SK-N-SH (cell line): ENCODE measurements at regions of chr3 and their contacts with region 1.

Region 1: DNA sequence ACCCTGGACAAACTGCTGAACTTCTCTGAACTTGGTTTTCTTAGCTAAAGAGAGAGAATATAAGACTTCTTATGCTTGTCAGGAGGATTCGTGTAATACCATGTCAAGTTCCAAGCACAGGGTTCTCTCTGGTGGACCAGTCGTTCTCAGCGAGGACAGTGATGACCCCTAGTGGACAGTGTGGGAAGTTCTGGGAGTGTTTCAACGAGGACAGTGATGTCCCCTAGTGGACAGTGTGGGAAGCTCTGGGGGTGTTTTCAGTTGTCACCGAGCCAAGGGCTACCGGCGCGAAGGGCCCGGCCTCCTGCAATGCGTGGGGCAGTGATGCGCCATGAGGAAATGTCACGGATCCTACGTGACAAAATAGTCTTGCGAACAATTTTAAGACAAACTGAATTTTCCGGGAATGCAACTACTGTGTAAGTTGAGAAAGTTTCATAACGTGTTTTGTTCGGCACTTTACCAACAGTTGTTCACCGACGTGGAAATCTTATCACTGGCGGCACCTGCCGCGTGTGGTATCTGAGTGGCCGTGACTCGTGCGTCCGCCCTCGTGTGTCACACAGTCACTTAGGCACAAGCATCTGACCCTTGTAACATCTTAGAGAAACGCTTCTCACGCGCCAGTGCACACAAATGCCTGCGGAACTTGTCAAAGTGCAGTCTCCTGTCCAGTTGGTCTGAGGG is 39.3 kb upstream of the MUC4 start:
- DNase-seq: peak; percentile 94
- H3K4me3 ChIP-seq: peak overlapping the region in 1 of 2 experiments; percentile 46; a peak in 1 of 4 replicates
- H3K27ac ChIP-seq: no peak overlapping the region
- H3K4me1 ChIP-seq: no peaks in the 10 kb centered on the region; a peak in 1 of 4 replicates
- H3K27me3 ChIP-seq: no peaks in the 10 kb centered on the region
- CTCF ChIP-seq: peak; percentile 100
- EP300 ChIP-seq: no peak
- RAD21 ChIP-seq: peak; percentile 99

Region 2: DNA sequence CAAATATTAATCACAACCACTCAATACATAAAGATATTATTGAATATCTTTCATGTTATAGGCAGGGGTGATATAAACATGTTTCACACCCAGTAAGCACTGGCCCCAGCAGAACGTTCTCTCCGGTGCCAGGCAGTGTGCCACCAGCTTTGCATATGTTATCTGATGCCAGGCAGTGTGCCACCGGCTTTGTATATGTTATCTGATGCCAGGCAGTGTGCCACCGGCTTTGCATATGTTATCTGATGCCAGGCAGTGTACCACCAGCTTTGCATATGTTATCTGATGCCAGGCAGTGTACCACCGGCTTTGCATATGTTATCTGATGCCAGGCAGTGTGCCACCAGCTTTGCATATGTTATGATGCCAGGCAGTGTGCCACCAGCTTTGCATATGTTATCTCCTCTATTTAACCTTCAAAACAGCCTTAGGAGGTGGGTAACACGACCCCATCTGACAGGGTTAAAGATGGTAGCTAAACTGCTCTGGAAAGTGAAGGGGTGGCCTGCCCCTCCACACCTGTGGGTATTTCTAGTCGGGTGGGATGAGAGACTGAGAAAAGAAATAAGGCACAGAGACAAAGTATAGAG is 123.3 kb before region 1 on chr3:
- CTCF ChIA-PET with region 1: interaction called, 11 read pairs
- POLR2A ChIA-PET with region 1: no interaction called
- DNase-seq: no peak
- H3K4me3 ChIP-seq: no peak overlapping the region
- H3K27ac ChIP-seq: no peak overlapping the region; a peak in 1 of 4 replicates
- H3K4me1 ChIP-seq: peaks cover 0 to 14% of the 10 kb centered on the region in 2 experiments; a peak in 1 of 4 replicates
- H3K27me3 ChIP-seq: no peaks in the 10 kb centered on the region; the same call in 1 of the 2 replicates
- CTCF ChIP-seq: no peak
- EP300 ChIP-seq: peak in 1 of 2 experiments; percentile 56; a peak in 1 of 4 replicates
- RAD21 ChIP-seq: no peak

Region 3: DNA sequence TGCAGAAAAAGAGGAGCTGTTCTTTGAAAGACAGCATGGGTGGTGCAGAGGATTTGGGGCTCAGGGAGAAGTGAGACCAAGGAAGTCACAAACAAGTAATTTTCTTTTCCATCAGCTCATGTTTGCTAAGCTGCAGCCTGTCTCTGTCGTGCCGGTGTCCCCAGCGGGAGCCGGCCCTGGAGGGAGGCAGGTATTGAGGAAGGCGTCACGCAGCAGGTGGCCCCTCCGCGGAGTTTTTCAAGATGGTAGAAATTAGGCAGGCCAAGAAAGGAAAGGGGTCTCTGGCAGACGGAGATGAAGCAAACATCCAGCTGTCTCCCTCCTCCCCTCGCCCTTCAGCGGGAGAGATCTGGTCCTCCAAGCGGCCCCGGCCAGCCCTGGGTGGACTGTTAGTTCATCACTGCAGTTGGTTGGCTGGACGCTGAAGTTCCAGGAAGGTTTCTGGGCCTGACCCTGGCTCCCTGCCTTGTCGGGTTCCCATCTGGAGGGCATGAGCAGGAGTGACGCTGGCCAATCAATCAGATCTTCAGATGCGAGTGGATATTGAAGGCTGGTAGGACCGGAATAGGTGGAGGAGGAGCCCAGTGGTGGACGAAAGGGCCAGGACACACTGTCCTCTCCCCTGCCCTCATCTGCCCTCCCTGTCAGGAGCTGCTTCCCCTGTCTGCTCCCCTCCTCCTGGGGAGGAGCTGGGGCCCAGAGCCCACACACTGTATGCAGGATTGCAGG is 11.6 kb before region 1 on chr3:
- CTCF ChIA-PET with region 1: interaction called, 21 read pairs
- POLR2A ChIA-PET with region 1: no interaction called
- DNase-seq: no peak
- H3K4me3 ChIP-seq: no peak overlapping the region
- H3K27ac ChIP-seq: no peak overlapping the region
- H3K4me1 ChIP-seq: peaks cover 0 to 2% of the 10 kb centered on the region in 2 experiments; a peak in 1 of 4 replicates
- H3K27me3 ChIP-seq: peaks cover 2% of the 10 kb centered on the region; the same call in 1 of the 2 replicates
- CTCF ChIP-seq: no peak
- EP300 ChIP-seq: no peak
- RAD21 ChIP-seq: no peak

Region 4: DNA sequence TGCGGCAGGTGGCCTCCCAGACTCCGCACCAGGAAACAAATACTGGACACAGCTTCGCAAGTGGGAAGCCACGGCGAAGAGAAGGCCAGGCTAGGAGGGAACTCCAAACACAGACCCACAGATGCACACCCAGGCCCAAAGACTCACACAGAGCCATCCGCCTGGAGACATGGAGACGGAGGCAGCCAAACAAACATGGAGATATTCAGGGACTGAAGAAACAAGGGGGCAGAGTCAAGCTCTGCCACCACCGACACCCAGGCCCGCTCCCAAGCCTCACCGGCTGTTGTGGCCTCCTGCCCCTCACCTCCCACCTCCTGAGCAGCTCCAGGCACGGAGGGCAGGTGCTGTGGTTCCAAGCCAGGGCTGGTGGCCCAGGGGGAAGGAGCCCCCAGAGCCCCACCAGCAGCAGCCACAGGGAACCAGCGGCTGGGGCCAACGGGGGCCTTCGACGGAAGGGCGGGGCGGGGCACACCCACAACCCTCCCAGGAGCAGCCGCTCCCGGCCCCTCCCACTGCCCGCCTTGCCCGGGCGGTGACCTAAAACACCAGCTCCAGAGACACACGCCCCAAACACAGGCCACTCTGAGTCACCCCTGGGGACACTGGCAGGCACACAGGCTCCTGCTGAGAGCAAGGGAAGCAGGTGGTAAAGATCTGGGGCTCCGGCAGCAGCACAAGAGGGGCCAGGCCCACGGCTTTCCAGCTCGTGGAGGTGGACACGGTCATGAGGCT is 25.5 kb after region 1 on chr3:
- CTCF ChIA-PET with region 1: interaction called, 606 read pairs
- POLR2A ChIA-PET with region 1: no interaction called
- DNase-seq: no peak
- H3K4me3 ChIP-seq: no peak overlapping the region
- H3K27ac ChIP-seq: no peak overlapping the region
- H3K4me1 ChIP-seq: no peaks in the 10 kb centered on the region
- H3K27me3 ChIP-seq: no peaks in the 10 kb centered on the region
- CTCF ChIP-seq: no peak
- EP300 ChIP-seq: no peak
- RAD21 ChIP-seq: no peak

Region 5: GRCh38 chr3:195909644-195910508 is 58.9 kb after region 1 on chr3:
- CTCF ChIA-PET with region 1: interaction called, 606 read pairs
- POLR2A ChIA-PET with region 1: no interaction called
- DNase-seq: peak; percentile 99
- H3K4me3 ChIP-seq: peak overlapping the region in 1 of 2 experiments; percentile 72; a peak in 3 of 4 replicates
- H3K27ac ChIP-seq: peak overlapping the region in 1 of 2 experiments; percentile 58; a peak in 1 of 4 replicates
- H3K4me1 ChIP-seq: peaks cover 14 to 32% of the 10 kb centered on the region in 2 experiments; a peak in 2 of 4 replicates
- H3K27me3 ChIP-seq: no peaks in the 10 kb centered on the region
- CTCF ChIP-seq: no peak
- EP300 ChIP-seq: no peak
- RAD21 ChIP-seq: no peak

Region 6: GRCh38 chr3:195956571-195956970 is 105.6 kb after region 1 on chr3:
- CTCF ChIA-PET with region 1: no interaction called
- POLR2A ChIA-PET with region 1: no interaction called
- DNase-seq: no peak
- H3K4me3 ChIP-seq: no peak overlapping the region
- H3K27ac ChIP-seq: no peak overlapping the region
- H3K4me1 ChIP-seq: no peaks in the 10 kb centered on the region; a peak in 1 of 4 replicates
- H3K27me3 ChIP-seq: no peaks in the 10 kb centered on the region
- CTCF ChIP-seq: no peak
- EP300 ChIP-seq: no peak
- RAD21 ChIP-seq: no peak

Region 7: GRCh38 chr3:196317687-196318467 is 466.9 kb after region 1 on chr3 and contains the start of gene DYNLT2B:
- CTCF ChIA-PET with region 1: no interaction called
- POLR2A ChIA-PET with region 1: no interaction called
- DNase-seq: peak; percentile 99
- H3K4me3 ChIP-seq: peak within 1 kb of the TSS; percentile 60 to 93
- H3K27ac ChIP-seq: peak within 1 kb of the TSS; percentile 90 to 93
- H3K4me1 ChIP-seq: no peaks in the 10 kb centered on the region; a peak in 1 of 4 replicates
- H3K27me3 ChIP-seq: no peaks in the 10 kb centered on the region
- CTCF ChIP-seq: no peak
- EP300 ChIP-seq: no peak
- RAD21 ChIP-seq: no peak; the same call in 1 of the 2 replicates
- polyA plus RNA-seq, gene DYNLT2B: 30.6 and 31.7 TPM in 2 replicates